Activated CD4-positive, alpha-beta memory T cell treated with anti-CD3 and anti-CD28 coated beads, Interleukin-2, amount 10 ng/mL, durations not matched to agents 7 days and 5 days (primary cell): ENCODE measurements at regions of chr5 and their contacts with region 1.

Region 1: GRCh38 chr5:111530298-111530740 is 18.0 kb upstream of the STARD4 start:
- DNase-seq: peak; percentile 89
- H3K4me3 Mint-ChIP-seq: peak overlapping the region; percentile 25
- H3K27ac Mint-ChIP-seq: peak overlapping the region; percentile 79
- H3K4me1 Mint-ChIP-seq: peaks cover 21% of the 10 kb centered on the region
- H3K27me3 Mint-ChIP-seq: peaks cover 6% of the 10 kb centered on the region

Region 2: GRCh38 chr5:111512375-111513130 is 17.8 kb before region 1 on chr5 and contains the start of gene STARD4:
- CTCF ChIA-PET with region 1: interaction called, 21 read pairs
- POLR2A ChIA-PET with region 1: interaction called, 26 read pairs
- DNase-seq: peak; percentile 96
- H3K4me3 Mint-ChIP-seq: peak within 1 kb of the TSS; percentile 89
- H3K27ac Mint-ChIP-seq: peak within 1 kb of the TSS; percentile 88
- H3K4me1 Mint-ChIP-seq: peaks cover 46% of the 10 kb centered on the region
- H3K27me3 Mint-ChIP-seq: no peaks in the 10 kb centered on the region
- total RNA-seq, gene STARD4: 71.8 to 74.9 TPM

Region 3: GRCh38 chr5:111517853-111518501 is 12.3 kb before region 1 on chr5:
- CTCF ChIA-PET with region 1: interaction called, 21 read pairs
- POLR2A ChIA-PET with region 1: interaction called, 26 read pairs
- DNase-seq: no peak
- H3K4me3 Mint-ChIP-seq: no peak overlapping the region
- H3K27ac Mint-ChIP-seq: no peak overlapping the region
- H3K4me1 Mint-ChIP-seq: peaks cover 9% of the 10 kb centered on the region
- H3K27me3 Mint-ChIP-seq: peaks cover 10% of the 10 kb centered on the region

Region 4: DNA sequence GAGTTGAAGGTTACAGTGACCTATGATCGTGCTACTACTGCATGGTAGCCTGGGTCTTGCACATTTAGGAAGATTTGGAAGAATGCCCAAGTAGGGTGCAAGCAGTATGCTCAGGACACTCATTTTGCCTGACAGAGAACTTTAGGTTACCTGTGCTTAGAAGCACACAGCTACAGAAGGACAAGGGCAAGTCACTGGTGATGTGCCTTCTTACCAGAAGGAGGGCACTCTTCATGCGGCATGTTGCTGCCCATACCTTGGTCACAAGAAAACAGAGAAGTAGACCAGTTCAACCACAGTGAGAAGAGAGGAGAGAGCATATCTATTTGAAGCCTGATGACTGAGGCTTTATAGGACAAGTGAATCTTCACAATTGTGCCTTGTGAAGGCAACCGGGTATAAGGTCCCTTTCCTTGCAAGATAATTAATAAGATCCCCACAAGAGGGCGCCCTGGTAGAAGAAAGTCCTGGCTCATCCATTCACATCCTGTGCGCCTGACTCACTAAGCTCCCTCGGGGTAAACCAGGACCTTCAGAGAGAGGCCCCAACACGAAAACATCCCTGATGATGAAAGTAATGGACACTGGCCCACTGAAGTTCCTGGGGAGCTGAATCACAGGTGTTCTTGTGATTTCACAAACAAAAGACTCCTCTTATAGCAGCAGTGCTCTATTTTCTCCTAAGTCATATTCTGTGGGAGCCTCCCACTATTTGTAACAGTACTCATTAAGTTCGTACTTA is 20.1 kb after region 1 on chr5:
- CTCF ChIA-PET with region 1: interaction called, 10 read pairs
- POLR2A ChIA-PET with region 1: no interaction called
- DNase-seq: peak; percentile 68
- H3K4me3 Mint-ChIP-seq: no peak overlapping the region
- H3K27ac Mint-ChIP-seq: no peak overlapping the region
- H3K4me1 Mint-ChIP-seq: peaks cover 15% of the 10 kb centered on the region
- H3K27me3 Mint-ChIP-seq: peaks cover 6% of the 10 kb centered on the region

Region 5: GRCh38 chr5:111574311-111574710 is 44.0 kb after region 1 on chr5:
- CTCF ChIA-PET with region 1: no interaction called
- POLR2A ChIA-PET with region 1: no interaction called
- DNase-seq: no peak
- H3K4me3 Mint-ChIP-seq: no peak overlapping the region
- H3K27ac Mint-ChIP-seq: no peak overlapping the region
- H3K4me1 Mint-ChIP-seq: no peaks in the 10 kb centered on the region
- H3K27me3 Mint-ChIP-seq: peaks cover 8% of the 10 kb centered on the region

Region 6: DNA sequence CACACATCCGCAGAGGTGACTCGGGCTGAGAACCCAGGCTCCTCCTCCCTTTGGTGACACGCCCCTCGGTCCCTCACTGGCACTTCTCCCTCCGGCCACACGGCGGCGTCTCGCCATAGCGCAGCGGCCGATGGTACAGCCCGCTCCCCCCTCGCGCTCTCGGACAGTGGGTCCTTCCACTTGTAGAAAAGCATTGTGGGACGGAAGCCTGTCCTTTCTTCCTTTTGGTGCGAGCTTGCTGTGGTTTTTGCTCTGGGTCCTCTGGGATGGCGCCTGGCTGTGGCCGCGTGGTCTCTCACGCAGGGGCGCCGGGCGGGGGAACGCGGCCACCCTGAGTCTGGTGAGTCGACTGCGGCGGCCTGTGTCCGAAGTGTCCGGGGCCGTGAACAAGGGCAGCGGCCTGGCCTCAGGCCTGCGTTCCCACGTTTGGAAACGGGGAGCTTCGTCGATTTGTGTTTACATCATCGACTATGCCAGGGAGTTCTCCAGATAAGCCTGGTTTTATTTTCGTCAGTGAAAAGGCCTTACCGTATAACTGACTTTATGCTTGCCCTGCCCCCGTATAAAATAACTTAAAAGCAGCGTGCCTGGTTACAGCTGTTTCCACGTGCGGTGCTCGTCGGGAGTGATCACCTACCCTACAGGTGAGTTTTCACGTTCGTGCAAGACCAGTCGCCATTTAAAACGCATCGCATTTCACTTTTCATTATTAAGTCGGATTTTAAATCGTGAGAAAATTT is 630.5 kb after region 1 on chr5:
- CTCF ChIA-PET with region 1: interaction called, 18 read pairs
- POLR2A ChIA-PET with region 1: interaction called, 6 read pairs
- DNase-seq: peak; percentile 93
- H3K4me3 Mint-ChIP-seq: peak overlapping the region; percentile 94
- H3K27ac Mint-ChIP-seq: peak overlapping the region; percentile 61
- H3K4me1 Mint-ChIP-seq: peaks cover 32% of the 10 kb centered on the region
- H3K27me3 Mint-ChIP-seq: peaks cover 15% of the 10 kb centered on the region